Activated CD4-positive, alpha-beta T cell treated with anti-CD3 and anti-CD28 coated beads, Interleukin-2, amount 10 ng/mL, durations not matched to agents 24 days and 14 days (primary cell): ENCODE measurements at regions of chr2 and their contacts with region 1.

Region 1: GRCh38 chr2:206693399-206694137 is 24.6 kb downstream of the DYTN start:
- DNase-seq: peak; percentile 82
- H3K4me3 Mint-ChIP-seq: no peak overlapping the region
- H3K27ac Mint-ChIP-seq: no peak overlapping the region
- H3K4me1 Mint-ChIP-seq: no peaks in the 10 kb centered on the region
- H3K27me3 Mint-ChIP-seq: peaks cover 6% of the 10 kb centered on the region

Region 2: GRCh38 chr2:205585449-205586383 is 1107.9 kb before region 1 on chr2:
- intact Hi-C with region 1: no loop called
- DNase-seq: no peak
- H3K4me3 Mint-ChIP-seq: no peak overlapping the region
- H3K27ac Mint-ChIP-seq: no peak overlapping the region
- H3K4me1 Mint-ChIP-seq: no peaks in the 10 kb centered on the region
- H3K27me3 Mint-ChIP-seq: peaks cover 6% of the 10 kb centered on the region

Region 3: DNA sequence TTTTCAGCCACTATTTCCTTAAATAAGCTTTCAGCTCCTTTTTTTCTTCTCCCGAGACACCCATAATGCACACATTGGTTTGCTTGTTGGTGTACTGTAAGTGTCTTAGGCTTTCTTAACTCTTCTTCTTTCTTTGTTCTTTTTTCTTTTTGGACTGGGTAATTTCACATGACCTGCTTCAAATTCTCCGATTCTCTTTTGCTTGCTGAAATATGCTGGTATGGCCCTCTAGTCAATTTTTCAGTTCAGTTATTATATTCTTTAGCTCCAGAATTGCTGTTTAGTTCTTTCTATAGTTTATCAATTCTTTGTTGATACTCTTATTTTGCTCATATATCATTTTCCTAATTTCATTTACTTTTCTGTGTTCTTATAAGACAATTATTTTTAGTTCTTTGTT is 87.1 kb after region 1 on chr2:
- intact Hi-C with region 1: loop called (anchors 2 kb)
- DNase-seq: no peak
- H3K4me3 Mint-ChIP-seq: no peak overlapping the region
- H3K27ac Mint-ChIP-seq: no peak overlapping the region
- H3K4me1 Mint-ChIP-seq: peaks cover 23% of the 10 kb centered on the region
- H3K27me3 Mint-ChIP-seq: no peaks in the 10 kb centered on the region

Region 4: DNA sequence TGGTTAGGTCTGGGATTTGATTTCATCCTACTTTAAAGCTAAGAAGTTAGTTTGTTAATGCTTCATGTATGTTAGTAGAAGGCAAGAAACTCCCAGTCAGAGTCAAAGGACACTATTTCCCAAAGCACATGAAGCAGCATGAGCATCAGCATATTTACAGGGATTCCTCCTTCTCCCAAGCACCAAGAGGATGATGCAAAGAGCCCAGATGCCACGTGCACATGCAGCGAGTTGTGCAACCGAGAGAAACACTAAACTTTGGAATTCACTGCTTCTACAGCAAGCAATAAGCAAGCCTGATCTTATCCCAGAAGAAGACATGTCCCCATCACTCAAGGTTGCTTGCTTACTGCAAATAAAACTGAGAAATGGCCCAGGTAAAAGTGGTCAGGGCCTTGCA is 278.2 kb after region 1 on chr2:
- intact Hi-C with region 1: no loop called
- DNase-seq: no peak
- H3K4me3 Mint-ChIP-seq: no peak overlapping the region
- H3K27ac Mint-ChIP-seq: no peak overlapping the region
- H3K4me1 Mint-ChIP-seq: no peaks in the 10 kb centered on the region
- H3K27me3 Mint-ChIP-seq: peaks cover 20% of the 10 kb centered on the region

Region 5: DNA sequence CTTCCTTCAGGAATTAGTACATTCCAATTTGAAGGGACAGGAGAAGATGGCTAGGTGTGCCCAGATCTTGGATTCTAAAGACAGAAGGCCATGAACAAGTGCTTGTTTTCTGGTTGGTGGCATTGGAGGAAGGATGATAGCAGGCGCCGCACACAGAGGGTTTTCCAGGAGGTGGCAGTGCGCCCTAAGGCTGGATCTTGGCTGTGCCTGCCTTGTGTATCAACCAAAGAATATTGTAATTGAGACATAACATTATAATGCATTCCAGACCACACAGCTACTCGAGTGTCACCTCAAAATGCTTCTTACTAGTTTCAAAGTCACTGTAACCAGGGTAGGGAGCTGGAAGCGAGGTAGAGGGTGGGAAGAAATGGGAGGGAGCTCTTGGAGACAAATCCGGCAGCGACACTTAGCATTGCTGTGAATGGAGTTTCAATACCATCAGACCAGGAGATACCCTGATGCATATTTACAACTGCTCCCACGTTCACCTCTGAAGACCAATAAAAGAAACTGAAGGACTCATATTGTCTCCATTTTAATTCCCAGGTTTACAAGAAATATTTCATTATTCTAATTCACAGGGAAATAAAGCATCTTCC is 288.3 kb after region 1 on chr2:
- intact Hi-C with region 1: loop called (anchors 10 kb)
- DNase-seq: peak; percentile 84
- H3K4me3 Mint-ChIP-seq: no peak overlapping the region
- H3K27ac Mint-ChIP-seq: no peak overlapping the region
- H3K4me1 Mint-ChIP-seq: peaks cover 8% of the 10 kb centered on the region
- H3K27me3 Mint-ChIP-seq: peaks cover 8% of the 10 kb centered on the region

Region 6: GRCh38 chr2:208072250-208072892 is 1378.8 kb after region 1 on chr2:
- intact Hi-C with region 1: loop called (anchors 10 kb)
- DNase-seq: peak; percentile 86
- H3K4me3 Mint-ChIP-seq: no peak overlapping the region
- H3K27ac Mint-ChIP-seq: no peak overlapping the region
- H3K4me1 Mint-ChIP-seq: no peaks in the 10 kb centered on the region
- H3K27me3 Mint-ChIP-seq: peaks cover 6% of the 10 kb centered on the region